ENCODE measurements at regions of chr14 and their contacts with region 1.

Region 1: DNA sequence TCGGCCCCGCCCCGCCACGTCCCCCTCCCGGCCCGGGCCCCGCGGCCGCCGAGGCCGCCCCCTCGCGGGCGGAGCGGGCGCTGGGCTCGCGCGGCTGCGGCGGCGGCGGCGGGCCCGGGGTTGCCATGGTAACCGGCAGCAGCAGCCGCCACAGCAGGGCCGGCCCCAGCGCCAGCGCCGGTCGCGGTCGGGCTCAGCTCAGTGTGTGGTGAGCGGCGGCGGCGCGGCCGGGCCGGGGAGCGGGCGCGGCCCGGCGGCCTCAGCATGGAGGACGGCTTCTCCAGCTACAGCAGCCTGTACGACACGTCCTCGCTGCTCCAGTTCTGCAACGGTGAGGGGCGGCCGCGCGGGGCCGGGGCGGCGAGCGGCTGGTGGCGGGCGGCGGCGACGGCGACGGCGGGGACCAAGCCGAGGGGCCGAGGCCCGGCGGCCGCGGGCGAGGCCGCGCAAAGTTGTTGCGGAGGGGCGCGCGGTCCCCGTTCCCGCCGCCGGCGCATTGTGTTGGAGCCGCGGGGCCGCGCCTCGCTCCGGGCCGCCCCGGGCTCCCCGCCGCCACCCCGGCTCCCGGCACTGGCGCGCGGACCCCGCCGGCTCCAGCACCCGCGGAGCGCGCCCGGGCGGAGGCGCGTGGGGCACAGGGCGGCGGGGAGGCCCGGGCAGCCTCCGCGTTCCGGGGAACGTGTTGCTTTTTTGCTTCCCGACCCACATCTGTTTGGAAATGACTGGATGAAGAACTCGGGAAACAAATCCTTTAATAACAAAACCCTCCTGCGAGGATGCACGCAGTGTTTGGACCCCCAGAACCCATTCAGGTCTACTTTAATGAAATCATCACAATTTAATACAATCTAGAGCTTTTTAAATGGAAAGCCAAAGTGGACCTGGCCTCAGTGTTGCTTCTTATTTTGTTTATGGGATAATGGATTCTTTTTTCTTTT is at the start of gene EML1:
- DNase-seq: peak; percentile 42
- H3K4me3 ChIP-seq: peak within 1 kb of the TSS; percentile 71
- CTCF ChIP-seq: no peak

Region 2: DNA sequence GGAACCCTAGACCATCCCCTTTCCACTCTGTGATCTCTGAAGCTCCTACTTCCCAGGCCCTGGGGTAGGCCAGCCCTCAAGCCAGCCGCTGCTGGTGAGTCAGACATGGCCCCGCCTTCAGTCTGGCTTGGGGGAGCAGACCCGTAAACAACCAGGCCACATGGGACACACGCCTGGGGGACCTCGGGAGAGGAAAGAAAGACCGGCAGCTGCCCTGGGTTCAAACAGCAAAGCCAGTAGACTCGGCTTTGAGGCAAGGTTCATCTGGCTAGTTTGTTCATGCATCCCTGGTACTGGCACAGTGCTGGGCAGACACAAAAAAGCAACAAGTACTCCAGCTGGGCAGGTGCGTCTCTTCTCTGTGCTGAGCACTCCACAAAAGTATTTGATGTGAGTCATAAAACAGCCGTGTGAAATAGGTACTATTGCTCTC is 414.7 kb before region 1 on chr14:
- in situ Hi-C with region 1: no loop called
- DNase-seq: no peak
- H3K4me3 ChIP-seq: no peak overlapping the region
- CTCF ChIP-seq: no peak

Region 3: DNA sequence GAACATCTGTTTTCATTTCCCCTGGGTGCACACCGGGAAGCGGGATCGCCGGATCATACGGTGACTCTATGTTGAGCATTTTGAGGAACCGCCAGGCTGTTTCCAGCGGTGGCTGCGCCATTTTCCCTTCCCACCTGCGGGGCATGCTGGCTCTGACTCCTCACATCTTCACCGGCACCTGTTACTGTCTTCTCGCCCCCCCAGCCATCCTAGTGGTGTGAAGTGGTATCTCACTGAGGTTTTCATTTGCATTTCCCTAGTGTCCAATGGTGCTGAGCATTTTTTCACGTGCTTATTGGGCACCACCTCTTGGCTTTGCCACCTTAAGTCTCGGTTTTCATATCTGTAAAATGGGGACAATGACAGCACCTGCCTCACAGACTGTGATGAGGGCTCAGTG is 44.3 kb before region 1 on chr14:
- in situ Hi-C with region 1: loop called (anchors 10 kb)
- DNase-seq: no peak
- H3K4me3 ChIP-seq: no peak overlapping the region
- CTCF ChIP-seq: peak; percentile 36

Region 4: GRCh38 chr14:100677554-100678468 is 884.3 kb after region 1 on chr14:
- in situ Hi-C with region 1: no loop called
- DNase-seq: peak; percentile 78
- H3K4me3 ChIP-seq: no peak overlapping the region
- CTCF ChIP-seq: no peak